HCT116 (cell line): ENCODE measurements at regions of chr2 and their contacts with region 1.

Region 1: GRCh38 chr2:159185401-159186130 is 100.9 kb downstream of the WDSUB1 start:
- DNase-seq: peak; percentile 19
- ATAC-seq: peak; percentile 89
- H3K4me3 ChIP-seq: no peak overlapping the region
- H3K27ac ChIP-seq: no peak overlapping the region
- H3K4me1 ChIP-seq: no peaks in the 10 kb centered on the region
- H3K27me3 ChIP-seq: no peaks in the 10 kb centered on the region
- CTCF ChIP-seq: peak; percentile 55 to 66 (median 58); a peak in 5 of 6 replicates
- POLR2A ChIP-seq: no peak
- RAD21 ChIP-seq: peak; percentile 86

Region 2: GRCh38 chr2:159035790-159036411 is 149.7 kb before region 1 on chr2:
- CTCF ChIA-PET with region 1: interaction called, 4 read pairs
- POLR2A ChIA-PET with region 1: no interaction called
- RAD21 ChIA-PET with region 1: no interaction called
- intact Hi-C with region 1: loop called (anchors 1 kb)
- DNase-seq: peak; percentile 62
- ATAC-seq: peak; percentile 99
- H3K4me3 ChIP-seq: no peak overlapping the region
- H3K27ac ChIP-seq: no peak overlapping the region
- H3K4me1 ChIP-seq: peaks cover 15 to 16% of the 10 kb centered on the region in 2 experiments
- H3K27me3 ChIP-seq: no peaks in the 10 kb centered on the region
- CTCF ChIP-seq: peak; percentile 56 to 65 (median 57)
- POLR2A ChIP-seq: no peak
- RAD21 ChIP-seq: peak; percentile 89

Region 3: GRCh38 chr2:159140070-159140769 is 45.3 kb before region 1 on chr2:
- CTCF ChIA-PET with region 1: interaction called, 4 read pairs
- POLR2A ChIA-PET with region 1: no interaction called
- RAD21 ChIA-PET with region 1: no interaction called
- intact Hi-C with region 1: loop called (anchors 1 kb)
- DNase-seq: no peak
- ATAC-seq: no peak
- H3K4me3 ChIP-seq: no peak overlapping the region
- H3K27ac ChIP-seq: no peak overlapping the region
- H3K4me1 ChIP-seq: peaks cover 0 to 4% of the 10 kb centered on the region in 2 experiments; a peak in 2 of 4 replicates
- H3K27me3 ChIP-seq: no peaks in the 10 kb centered on the region
- CTCF ChIP-seq: no peak
- POLR2A ChIP-seq: no peak
- RAD21 ChIP-seq: no peak

Region 4: GRCh38 chr2:159840616-159841015 is 655.0 kb after region 1 on chr2:
- CTCF ChIA-PET with region 1: no interaction called
- POLR2A ChIA-PET with region 1: no interaction called
- RAD21 ChIA-PET with region 1: no interaction called
- intact Hi-C with region 1: no loop called
- DNase-seq: no peak
- ATAC-seq: no peak
- H3K4me3 ChIP-seq: no peak overlapping the region
- H3K27ac ChIP-seq: no peak overlapping the region
- H3K4me1 ChIP-seq: no peaks in the 10 kb centered on the region
- H3K27me3 ChIP-seq: no peaks in the 10 kb centered on the region
- CTCF ChIP-seq: no peak
- POLR2A ChIP-seq: no peak
- RAD21 ChIP-seq: no peak